ENCODE measurements at regions of chr19 and their contacts with region 1.

Region 1: GRCh38 chr19:44723952-44724319 is 24.6 kb upstream of the BCL3 start:
- DNase-seq: peak; percentile 53
- H3K4me3 ChIP-seq: no peak overlapping the region
- H3K27ac ChIP-seq: no peak overlapping the region
- H3K27me3 ChIP-seq: no peaks in the 10 kb centered on the region
- CTCF ChIP-seq: peak; percentile 97

Region 2: DNA sequence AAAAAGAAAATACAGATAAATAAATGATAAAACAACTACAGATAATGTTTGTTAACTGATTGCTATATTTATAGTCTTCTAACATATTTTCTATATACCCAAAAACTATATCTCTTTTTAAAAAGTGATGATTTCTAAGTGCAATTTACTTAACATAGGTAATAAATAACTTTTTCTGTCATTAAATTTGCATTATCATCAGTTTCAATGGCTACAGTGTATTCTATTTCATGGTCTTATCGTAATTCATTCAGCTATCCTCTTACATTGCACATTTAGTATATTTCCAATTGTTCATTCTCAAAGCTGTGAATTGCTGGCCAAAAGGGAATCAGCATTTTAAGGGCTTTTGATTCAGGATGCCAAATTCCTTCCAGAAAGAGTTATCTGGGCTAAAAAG is 227.2 kb before region 1 on chr19:
- CTCF ChIA-PET with region 1: no interaction called
- POLR2A ChIA-PET with region 1: no interaction called
- DNase-seq: no peak
- H3K4me3 ChIP-seq: no peak overlapping the region
- H3K27ac ChIP-seq: no peak overlapping the region
- H3K27me3 ChIP-seq: no peaks in the 10 kb centered on the region
- CTCF ChIP-seq: no peak

Region 3: DNA sequence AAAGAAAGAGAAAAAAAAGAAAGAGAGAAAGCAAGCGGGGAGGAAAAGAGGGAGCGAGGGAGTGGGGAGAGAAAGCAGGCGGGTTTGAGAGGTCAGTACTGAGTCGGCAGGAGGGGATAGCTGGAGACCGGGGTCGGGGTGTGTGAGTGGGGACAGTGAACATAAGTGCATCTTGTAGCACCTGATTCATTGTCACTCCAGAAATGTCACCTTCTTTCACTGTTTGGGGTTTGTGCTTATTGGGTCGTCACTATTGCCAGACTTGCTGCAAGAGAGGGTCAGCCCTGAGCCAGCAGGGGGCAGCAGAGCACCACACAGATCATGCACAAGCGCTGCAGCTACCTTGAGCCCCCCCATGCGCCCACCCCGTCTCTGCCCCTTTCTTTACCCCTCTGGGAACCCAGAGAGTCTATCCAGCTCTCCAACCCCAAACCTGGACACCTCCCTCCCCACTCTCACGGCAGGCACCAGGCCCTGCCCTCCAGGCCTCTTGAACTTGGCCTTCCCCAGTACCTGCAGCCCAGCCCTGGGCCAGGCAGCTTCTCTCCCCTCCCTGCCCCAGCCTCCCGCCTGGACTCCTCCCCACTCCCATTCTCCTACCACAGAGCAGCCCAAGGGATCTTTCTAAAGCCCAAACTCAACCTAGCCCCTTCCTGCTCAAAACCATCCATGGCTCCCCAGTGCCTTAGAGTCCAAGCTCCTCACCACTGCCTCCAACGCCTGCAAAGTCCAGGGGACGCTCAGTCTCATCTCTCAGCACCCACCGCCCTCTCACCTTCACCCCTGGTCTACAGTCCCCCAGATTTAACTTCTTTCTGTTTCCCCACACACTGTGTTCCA is 34.7 kb before region 1 on chr19:
- CTCF ChIA-PET with region 1: interaction called, 12 read pairs
- POLR2A ChIA-PET with region 1: no interaction called
- DNase-seq: peak; percentile 34
- H3K4me3 ChIP-seq: no peak overlapping the region
- H3K27ac ChIP-seq: no peak overlapping the region
- H3K27me3 ChIP-seq: no peaks in the 10 kb centered on the region
- CTCF ChIP-seq: peak; percentile 93

Region 4: DNA sequence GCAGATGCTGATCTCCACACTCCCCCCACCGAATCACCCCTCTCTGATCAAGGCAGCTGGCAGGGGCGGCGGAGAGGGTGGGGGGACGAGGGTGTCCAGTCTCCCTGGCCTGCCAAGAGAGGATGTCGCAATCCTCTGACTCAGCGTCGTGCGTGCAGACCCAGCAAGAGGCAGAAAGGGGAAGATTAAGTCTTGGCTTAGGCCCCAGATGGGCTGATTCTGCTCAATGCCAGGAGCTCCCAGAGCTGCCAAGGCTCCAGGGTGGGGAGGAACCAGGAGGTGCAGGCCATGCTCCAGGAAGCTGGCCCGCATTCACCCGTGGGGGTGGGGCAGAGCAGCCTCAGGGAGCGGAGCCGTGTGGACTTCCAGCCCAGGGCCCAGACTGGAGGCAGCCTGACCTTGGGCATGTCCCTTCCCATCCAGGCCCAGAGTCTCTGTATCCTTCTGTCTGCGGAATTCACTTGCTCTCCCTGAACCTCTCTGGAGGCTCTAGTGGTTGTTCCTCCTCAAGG is 18.0 kb after region 1 on chr19:
- CTCF ChIA-PET with region 1: interaction called, 18 read pairs
- POLR2A ChIA-PET with region 1: interaction called, 8 read pairs
- DNase-seq: peak; percentile 98
- H3K4me3 ChIP-seq: no peak overlapping the region
- H3K27ac ChIP-seq: peak overlapping the region; percentile 87
- H3K27me3 ChIP-seq: no peaks in the 10 kb centered on the region
- CTCF ChIP-seq: no peak

Region 5: DNA sequence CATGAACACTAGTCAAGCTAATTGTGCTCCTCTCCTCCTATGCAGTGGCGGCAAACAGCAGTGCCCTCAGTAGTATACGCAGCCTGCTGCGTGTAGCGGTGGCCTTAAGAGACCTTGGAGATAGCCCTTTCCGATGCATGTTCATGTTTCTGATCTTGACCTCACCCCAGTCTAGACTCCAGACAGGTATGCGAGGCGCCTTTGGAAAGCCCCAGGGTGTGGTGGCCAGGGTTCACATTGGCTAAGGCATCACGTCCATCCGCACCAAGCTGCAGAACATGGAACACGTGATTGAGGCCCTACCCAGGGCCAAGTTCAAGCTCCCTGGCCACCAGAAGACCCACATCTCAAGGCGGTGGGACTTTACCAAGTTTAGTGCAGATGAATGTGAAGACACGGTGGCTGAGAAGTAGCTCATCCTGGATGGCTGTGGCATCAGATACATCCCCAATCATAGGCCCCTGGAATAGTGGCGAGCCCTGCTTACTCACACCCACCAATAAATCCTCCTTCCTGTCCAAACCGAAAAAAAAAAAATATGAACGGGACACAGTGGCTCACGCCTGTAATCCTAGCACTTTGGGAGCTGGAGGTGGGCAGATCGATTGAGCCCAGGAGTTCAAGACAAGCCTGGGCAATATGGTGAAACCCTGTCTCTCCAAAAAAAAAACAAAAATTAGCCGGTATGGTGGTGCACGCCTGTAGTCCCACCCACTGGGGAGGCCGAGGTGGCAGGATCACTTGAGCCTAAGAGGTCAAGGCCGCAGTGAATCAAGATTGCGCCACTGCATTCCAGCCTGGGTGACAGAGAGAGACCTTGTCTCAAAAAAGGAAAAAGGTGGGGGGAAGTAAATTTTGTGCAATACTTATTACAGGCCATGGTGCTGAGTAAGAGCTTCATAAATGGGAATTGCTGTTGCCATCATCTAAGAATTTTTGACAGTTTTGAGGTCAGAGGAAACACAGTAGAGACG is 41.3 kb after region 1 on chr19:
- CTCF ChIA-PET with region 1: interaction called, 294 read pairs
- POLR2A ChIA-PET with region 1: interaction called, 9 read pairs
- DNase-seq: no peak
- H3K4me3 ChIP-seq: no peak overlapping the region
- H3K27ac ChIP-seq: no peak overlapping the region
- H3K27me3 ChIP-seq: no peaks in the 10 kb centered on the region
- CTCF ChIP-seq: no peak

Region 6: DNA sequence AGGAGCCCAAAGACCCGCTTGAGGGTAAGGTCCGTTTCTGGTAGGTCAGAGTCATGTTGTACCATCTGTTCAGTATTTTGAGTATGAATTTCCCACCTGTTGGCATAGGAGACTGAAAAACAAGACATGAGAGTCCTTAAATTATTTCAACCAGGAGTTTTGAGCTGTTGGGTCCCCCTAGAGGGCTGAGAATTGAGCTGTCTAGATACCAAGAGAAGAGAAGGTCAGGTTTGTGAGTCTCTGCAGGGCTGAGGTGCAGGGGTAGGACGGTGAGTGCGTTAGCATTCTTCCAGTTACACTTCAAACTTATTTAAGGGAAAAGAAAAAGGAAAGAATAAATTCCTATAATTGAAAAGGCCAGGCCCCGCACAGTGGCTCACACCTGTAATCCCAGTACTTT is 58.8 kb after region 1 on chr19:
- CTCF ChIA-PET with region 1: interaction called, 47 read pairs
- POLR2A ChIA-PET with region 1: no interaction called
- DNase-seq: no peak
- H3K4me3 ChIP-seq: no peak overlapping the region
- H3K27ac ChIP-seq: no peak overlapping the region
- H3K27me3 ChIP-seq: no peaks in the 10 kb centered on the region
- CTCF ChIP-seq: 0 out of 2 replicates have a peak, but pooled peaks have one; percentile 7

Region 7: GRCh38 chr19:44845612-44846454 is 121.9 kb after region 1 on chr19 and contains the start of gene NECTIN2:
- CTCF ChIA-PET with region 1: interaction called, 32 read pairs
- POLR2A ChIA-PET with region 1: no interaction called
- DNase-seq: peak; percentile 98
- H3K4me3 ChIP-seq: peak within 1 kb of the TSS; percentile 94
- H3K27ac ChIP-seq: peak within 1 kb of the TSS; percentile 86
- H3K27me3 ChIP-seq: no peaks in the 10 kb centered on the region
- CTCF ChIP-seq: peak; percentile 83
- polyA plus RNA-seq, gene NECTIN2: 80.2 and 110 TPM in 2 replicates